Activated CD4-positive, alpha-beta T cell treated with anti-CD3 and anti-CD28 coated beads, Interleukin-2, amount 10 ng/mL, durations not matched to agents 24 days and 14 days (primary cell): ENCODE measurements at regions of chr10 and their contacts with region 1.

Region 1: GRCh38 chr10:24209946-24210491 is 1.1 kb downstream of the KIAA1217 start:
- DNase-seq: peak; percentile 65
- H3K4me3 Mint-ChIP-seq: peak overlapping the region; percentile 72
- H3K27ac Mint-ChIP-seq: peak overlapping the region; percentile 90
- H3K4me1 Mint-ChIP-seq: peaks cover 32% of the 10 kb centered on the region
- H3K27me3 Mint-ChIP-seq: peaks cover 33% of the 10 kb centered on the region

Region 2: GRCh38 chr10:22379059-22379458 is 1831.0 kb before region 1 on chr10:
- intact Hi-C with region 1: loop called (anchors 5 kb)
- DNase-seq: peak; percentile 74
- H3K4me3 Mint-ChIP-seq: peak overlapping the region; percentile 10
- H3K27ac Mint-ChIP-seq: peak overlapping the region; percentile 74
- H3K4me1 Mint-ChIP-seq: peaks cover 17% of the 10 kb centered on the region
- H3K27me3 Mint-ChIP-seq: peaks cover 4% of the 10 kb centered on the region

Region 3: DNA sequence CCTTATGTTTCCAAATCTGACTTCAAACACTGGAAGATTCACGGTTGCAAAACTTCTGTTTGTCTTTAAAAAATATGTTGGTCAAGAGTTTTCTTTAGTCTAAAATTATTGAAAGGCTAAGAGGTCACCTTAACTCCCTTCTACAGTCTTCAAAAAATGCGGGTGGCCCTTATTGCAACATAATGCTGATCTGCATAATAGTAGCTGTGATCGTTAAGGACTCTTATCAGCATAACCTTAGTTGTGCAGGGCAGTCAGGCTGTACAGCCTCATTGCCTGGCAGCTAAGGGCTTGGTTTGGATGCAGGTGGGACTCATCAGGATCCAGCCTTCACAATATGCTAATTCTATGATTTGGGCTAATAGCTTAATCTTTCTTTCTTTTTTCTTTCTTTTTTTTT is 13.9 kb after region 1 on chr10:
- intact Hi-C with region 1: no loop called
- DNase-seq: no peak
- H3K4me3 Mint-ChIP-seq: no peak overlapping the region
- H3K27ac Mint-ChIP-seq: no peak overlapping the region
- H3K4me1 Mint-ChIP-seq: no peaks in the 10 kb centered on the region
- H3K27me3 Mint-ChIP-seq: no peaks in the 10 kb centered on the region

Region 4: GRCh38 chr10:24360282-24361127 is 150.5 kb after region 1 on chr10:
- intact Hi-C with region 1: loop called (anchors 5 kb)
- DNase-seq: peak; percentile 76
- H3K4me3 Mint-ChIP-seq: no peak overlapping the region
- H3K27ac Mint-ChIP-seq: no peak overlapping the region
- H3K4me1 Mint-ChIP-seq: no peaks in the 10 kb centered on the region
- H3K27me3 Mint-ChIP-seq: no peaks in the 10 kb centered on the region

Region 5: DNA sequence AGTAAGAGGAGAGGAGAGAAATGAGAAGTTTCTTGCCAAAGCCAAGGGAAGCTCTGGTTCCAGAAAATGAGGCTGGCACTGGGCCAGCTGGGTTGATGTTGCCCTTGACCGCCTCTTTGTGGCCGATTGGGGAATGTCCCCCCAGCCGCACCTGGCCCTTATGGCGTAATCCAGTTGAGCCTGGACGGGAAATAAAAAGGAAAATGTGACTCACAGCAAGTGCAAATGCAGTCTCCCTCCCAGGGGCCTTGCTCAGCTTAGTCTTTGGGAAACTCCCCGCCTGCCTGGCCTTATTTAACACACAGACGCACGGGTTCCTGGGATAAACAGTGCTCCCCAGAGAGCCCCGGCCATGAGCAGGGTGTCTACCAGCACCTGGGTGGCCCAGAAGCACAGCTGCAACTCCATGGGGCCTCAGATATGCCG is 173.7 kb after region 1 on chr10:
- intact Hi-C with region 1: loop called (anchors 1 kb)
- DNase-seq: peak; percentile 80
- H3K4me3 Mint-ChIP-seq: no peak overlapping the region
- H3K27ac Mint-ChIP-seq: peak overlapping the region; percentile 90
- H3K4me1 Mint-ChIP-seq: peaks cover 12% of the 10 kb centered on the region
- H3K27me3 Mint-ChIP-seq: no peaks in the 10 kb centered on the region

Region 6: GRCh38 chr10:24406809-24407483 is 196.9 kb after region 1 on chr10:
- intact Hi-C with region 1: no loop called
- DNase-seq: no peak
- H3K4me3 Mint-ChIP-seq: no peak overlapping the region
- H3K27ac Mint-ChIP-seq: no peak overlapping the region
- H3K4me1 Mint-ChIP-seq: no peaks in the 10 kb centered on the region
- H3K27me3 Mint-ChIP-seq: peaks cover 5% of the 10 kb centered on the region

Region 7: GRCh38 chr10:24449321-24449740 is 239.3 kb after region 1 on chr10:
- intact Hi-C with region 1: loop called (anchors 5 kb)
- DNase-seq: peak; percentile 57
- H3K4me3 Mint-ChIP-seq: peak overlapping the region; percentile 0
- H3K27ac Mint-ChIP-seq: peak overlapping the region; percentile 49
- H3K4me1 Mint-ChIP-seq: peaks cover 28% of the 10 kb centered on the region
- H3K27me3 Mint-ChIP-seq: peaks cover 33% of the 10 kb centered on the region

Region 8: GRCh38 chr10:24518981-24519597 is 309.1 kb after region 1 on chr10:
- intact Hi-C with region 1: loop called (anchors 5 kb)
- DNase-seq: peak; percentile 81
- H3K4me3 Mint-ChIP-seq: peak overlapping the region; percentile 2
- H3K27ac Mint-ChIP-seq: no peak overlapping the region
- H3K4me1 Mint-ChIP-seq: peaks cover 11% of the 10 kb centered on the region
- H3K27me3 Mint-ChIP-seq: no peaks in the 10 kb centered on the region